Activated T-helper 1 cell treated with anti-CD3 and anti-CD28 coated beads, Interleukin-12 subunit alpha, Interleukin-12 subunit beta, Interleukin-2, Interleukin-4 antibody, amounts not matched to agents 30 ng/mL and 10 ng/mL and 1 ng/mL, durations not matched to agents 14 hours and 24 hours and 36 hours (primary cell): ENCODE measurements at regions of chr1 and their contacts with region 1.

Region 1: DNA sequence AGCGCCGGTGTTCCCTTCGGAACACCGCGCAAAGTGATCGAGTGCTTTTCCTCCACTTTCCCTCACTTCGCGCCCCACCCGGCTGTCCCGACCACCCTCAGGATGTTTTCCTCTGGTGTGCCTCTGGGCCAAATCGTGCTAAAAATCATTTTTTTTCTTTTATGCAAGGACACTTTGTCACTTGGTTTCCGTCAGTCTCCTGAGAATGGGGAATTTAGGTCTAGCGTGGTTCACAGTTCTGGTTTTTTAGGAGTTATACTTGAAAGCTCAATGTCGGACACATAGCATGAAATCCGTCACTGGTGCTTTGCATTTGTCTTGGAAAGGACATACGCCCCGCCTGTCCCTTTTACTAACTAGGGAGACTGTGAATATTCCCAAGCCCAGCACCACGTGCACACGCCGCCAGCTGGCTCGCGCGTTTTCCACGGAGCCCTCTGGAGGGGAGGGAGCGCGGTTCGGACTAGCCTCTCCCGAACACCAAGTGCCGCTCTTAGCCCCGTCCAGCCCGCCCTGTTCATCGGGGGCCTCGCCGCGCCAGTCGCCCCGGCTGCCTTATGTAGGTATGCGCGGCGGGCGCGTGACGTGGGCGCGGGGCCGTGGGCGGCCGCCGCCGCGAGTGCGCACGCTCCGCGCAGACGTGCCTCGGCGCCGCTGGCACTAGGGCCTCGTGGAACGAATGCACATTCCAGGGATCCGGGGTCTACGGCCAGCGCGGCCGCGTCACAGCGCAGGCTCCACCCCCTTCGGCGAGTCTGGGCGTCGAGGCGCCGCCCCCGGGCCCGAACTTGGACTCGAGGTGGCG is 572 bp upstream of the IRF2BP2 start:
- DNase-seq: peak; percentile 90
- H3K4me3 Mint-ChIP-seq: peak overlapping the region; percentile 92
- H3K27ac Mint-ChIP-seq: peak overlapping the region; percentile 99
- H3K4me1 Mint-ChIP-seq: peaks cover 49% of the 10 kb centered on the region
- H3K27me3 Mint-ChIP-seq: no peaks in the 10 kb centered on the region

Region 2: DNA sequence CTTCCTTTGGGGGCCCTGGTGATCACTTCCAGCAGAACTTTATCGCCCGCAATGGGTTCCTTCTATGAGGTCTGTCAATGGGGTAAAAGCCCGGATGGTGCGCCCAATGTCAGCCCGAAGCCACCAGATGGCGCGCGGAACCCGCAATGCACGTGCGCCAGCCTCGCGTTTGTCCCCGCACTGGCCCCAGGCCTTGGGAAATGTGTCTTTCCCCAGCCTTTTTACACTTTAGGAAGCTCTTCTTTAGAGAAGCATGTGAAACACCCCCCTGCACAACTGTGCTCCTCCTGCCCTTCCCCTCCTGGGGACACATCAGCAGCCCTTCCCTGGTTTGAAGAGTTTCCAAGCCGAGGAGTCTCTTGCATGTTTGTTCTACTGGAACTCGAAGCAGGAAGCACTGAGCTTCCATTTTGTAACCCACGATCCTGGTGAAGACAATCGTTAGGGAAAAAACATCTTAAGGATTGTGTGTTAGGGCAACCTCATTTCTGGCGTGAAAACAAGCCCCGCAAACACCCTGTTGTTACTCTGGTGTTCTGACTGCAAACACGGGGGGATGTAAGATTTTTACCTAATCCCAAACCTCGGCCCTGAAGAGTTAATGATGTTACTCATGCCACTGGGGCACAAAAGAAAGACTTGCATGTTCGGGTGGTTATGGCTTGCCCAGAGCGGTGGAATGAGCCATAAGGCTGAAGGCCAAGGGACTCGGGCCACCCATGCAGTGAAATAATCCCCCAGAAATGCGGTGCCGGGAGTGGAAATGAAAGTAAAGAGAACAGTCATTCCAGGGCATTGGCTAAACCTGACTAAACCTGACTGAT is 111.2 kb before region 1 on chr1:
- intact Hi-C with region 1: loop called (anchors 1 kb)
- DNase-seq: peak; percentile 78
- H3K4me3 Mint-ChIP-seq: no peak overlapping the region
- H3K27ac Mint-ChIP-seq: peak overlapping the region; percentile 80
- H3K4me1 Mint-ChIP-seq: peaks cover 83% of the 10 kb centered on the region
- H3K27me3 Mint-ChIP-seq: no peaks in the 10 kb centered on the region

Region 3: DNA sequence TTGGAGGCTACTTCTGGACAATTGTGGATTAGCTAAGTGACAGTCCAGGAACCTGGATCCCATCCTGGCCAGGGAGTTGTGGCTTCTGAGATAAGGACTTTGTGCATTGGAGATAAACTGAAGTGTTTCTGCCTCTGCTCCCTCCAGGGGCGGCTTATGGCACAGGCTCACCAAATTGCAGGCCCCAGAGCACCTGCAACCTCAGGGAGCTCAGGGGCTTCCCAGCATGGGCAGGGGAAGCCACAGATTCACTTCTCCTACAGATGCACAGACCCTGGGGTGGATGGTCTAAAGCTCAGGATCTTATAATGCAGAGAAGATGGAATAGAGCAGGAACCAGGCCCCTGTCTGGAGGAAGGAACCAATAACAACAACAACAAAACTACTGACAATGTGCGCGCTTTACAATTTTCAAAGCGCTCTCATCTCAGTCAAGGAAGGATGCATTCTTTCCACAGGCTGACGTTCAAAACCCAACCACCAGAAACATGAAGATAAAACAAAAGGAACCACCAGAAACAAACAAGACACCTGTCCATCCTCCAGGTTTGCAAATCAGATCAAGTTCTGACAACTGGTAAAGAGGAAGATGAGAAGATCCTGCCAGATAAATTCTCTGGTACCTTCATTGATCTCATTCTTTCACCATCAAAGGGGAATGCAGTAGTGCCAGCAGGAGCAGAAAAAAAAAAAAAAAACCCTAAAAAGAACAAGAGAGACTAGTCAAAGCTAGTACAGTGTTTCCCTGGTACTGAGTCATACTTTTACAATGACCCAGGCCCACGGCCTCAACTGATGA is 120.4 kb after region 1 on chr1:
- intact Hi-C with region 1: loop called (anchors 1 kb)
- DNase-seq: peak; percentile 49
- H3K4me3 Mint-ChIP-seq: peak overlapping the region; percentile 55
- H3K27ac Mint-ChIP-seq: peak overlapping the region; percentile 97
- H3K4me1 Mint-ChIP-seq: peaks cover 75% of the 10 kb centered on the region
- H3K27me3 Mint-ChIP-seq: no peaks in the 10 kb centered on the region

Region 4: GRCh38 chr1:234925440-234926263 is 315.1 kb after region 1 on chr1:
- intact Hi-C with region 1: loop called (anchors 1 kb)
- DNase-seq: peak; percentile 17
- H3K4me3 Mint-ChIP-seq: peak overlapping the region; percentile 74
- H3K27ac Mint-ChIP-seq: peak overlapping the region; percentile 97
- H3K4me1 Mint-ChIP-seq: peaks cover 64% of the 10 kb centered on the region
- H3K27me3 Mint-ChIP-seq: no peaks in the 10 kb centered on the region

Region 5: DNA sequence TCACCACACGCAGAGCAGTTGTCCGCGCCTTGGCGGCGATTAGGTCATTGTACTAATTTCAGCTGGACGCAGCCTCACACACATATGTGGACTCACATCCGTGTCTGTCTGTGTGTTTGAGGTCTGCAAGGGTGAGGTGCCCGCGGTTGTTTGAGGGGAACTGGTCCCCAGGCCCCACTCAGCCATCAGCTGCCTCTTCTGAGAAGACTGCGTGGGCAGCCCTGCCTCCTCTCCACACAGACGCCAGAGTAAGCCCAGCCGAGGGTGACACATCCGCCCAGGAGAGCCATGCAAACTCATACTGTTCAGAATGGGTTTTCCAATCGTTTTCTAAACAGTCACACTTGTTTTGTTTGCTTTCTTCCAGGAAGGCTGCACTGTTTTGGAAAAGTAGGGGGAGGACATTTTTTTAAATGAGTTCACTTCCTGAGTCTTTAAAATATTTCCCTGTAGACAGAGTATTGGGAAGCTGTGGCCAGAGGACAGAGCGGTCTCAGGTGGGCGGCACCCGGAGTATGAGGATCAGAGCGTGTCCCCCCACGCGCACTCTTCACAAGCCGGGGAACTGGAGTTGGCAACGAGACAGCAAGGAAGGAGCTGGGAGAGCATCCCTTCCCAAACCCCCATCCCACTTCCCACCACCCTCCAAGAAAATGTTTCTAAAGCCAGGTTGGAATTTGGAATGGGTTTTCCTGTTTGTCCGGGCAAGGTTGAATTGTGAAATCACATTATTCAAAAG is 464.8 kb after region 1 on chr1:
- intact Hi-C with region 1: loop called (anchors 1 kb)
- DNase-seq: peak; percentile 34
- H3K4me3 Mint-ChIP-seq: peak overlapping the region; percentile 71
- H3K27ac Mint-ChIP-seq: peak overlapping the region; percentile 99
- H3K4me1 Mint-ChIP-seq: peaks cover 42% of the 10 kb centered on the region
- H3K27me3 Mint-ChIP-seq: no peaks in the 10 kb centered on the region

Region 6: GRCh38 chr1:235866913-235867845 is 1256.6 kb after region 1 on chr1:
- intact Hi-C with region 1: loop called (anchors 2 kb)
- DNase-seq: peak; percentile 99
- H3K4me3 Mint-ChIP-seq: peak overlapping the region; percentile 98
- H3K27ac Mint-ChIP-seq: peak overlapping the region; percentile 98
- H3K4me1 Mint-ChIP-seq: peaks cover 57% of the 10 kb centered on the region
- H3K27me3 Mint-ChIP-seq: no peaks in the 10 kb centered on the region